Ascending aorta (tissue), 2 donors: ENCODE measurements at regions of chr19 and their contacts with region 1.

Region 1: GRCh38 chr19:44820648-44821609 is 12.0 kb downstream of the BCAM start:
- DNase-seq: peak; percentile 75 to 93
- H3K4me3 ChIP-seq: peak overlapping the region in 1 of 2 donors; percentile 44
- H3K27ac ChIP-seq: peak overlapping the region; percentile 82 to 87
- H3K4me1 ChIP-seq: peaks cover 0 to 18% of the 10 kb centered on the region in 2 donors
- H3K27me3 ChIP-seq: no peaks in the 10 kb centered on the region
- CTCF ChIP-seq: no peak

Region 2: DNA sequence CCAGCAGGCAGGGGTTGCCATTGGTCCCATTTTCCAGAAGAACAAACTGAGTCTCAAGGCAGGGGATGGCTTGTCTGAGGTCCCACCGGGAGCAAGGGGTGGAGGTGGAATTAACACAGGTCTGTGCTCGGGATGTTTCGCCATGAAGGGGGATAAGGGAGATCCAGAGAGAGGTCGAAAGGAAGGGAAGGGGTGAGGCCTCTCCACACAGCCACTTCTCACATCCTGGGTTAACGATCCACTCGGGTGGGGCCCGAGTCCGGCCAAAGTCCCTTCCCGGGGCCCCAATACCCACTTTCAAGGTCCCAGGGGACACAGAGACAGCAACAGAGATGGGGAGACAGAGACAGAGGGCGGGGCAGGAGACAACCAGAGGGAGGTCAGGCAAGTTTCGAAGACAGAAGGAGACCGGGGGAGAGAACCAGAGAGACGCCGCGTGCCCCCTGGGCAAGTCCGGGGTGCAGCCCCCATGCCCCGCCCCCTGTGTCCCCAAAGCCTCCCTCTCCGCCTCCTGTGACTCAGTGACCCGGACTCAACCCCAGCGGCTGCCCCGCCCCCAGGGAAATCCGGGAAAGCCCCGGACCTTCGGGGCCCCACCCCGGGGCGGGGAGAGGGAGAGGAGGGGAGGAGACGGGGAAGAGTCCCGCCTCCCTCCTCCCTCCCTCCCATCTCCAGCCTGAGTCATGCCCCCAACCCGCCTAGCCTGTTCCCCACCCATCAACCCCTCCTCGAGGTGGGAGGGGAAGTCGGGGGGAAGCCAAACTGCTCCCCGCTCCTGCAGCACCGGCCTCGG is 73.8 kb before region 1 on chr19:
- intact Hi-C with region 1: loop called (anchors 2 kb)
- DNase-seq: peak; percentile 89 to 98
- H3K4me3 ChIP-seq: peak overlapping the region; percentile 75 to 83
- H3K27ac ChIP-seq: peak overlapping the region; percentile 82 to 85
- H3K4me1 ChIP-seq: peaks cover 22 to 32% of the 10 kb centered on the region in 2 donors
- H3K27me3 ChIP-seq: no peaks in the 10 kb centered on the region
- CTCF ChIP-seq: no peak

Region 3: DNA sequence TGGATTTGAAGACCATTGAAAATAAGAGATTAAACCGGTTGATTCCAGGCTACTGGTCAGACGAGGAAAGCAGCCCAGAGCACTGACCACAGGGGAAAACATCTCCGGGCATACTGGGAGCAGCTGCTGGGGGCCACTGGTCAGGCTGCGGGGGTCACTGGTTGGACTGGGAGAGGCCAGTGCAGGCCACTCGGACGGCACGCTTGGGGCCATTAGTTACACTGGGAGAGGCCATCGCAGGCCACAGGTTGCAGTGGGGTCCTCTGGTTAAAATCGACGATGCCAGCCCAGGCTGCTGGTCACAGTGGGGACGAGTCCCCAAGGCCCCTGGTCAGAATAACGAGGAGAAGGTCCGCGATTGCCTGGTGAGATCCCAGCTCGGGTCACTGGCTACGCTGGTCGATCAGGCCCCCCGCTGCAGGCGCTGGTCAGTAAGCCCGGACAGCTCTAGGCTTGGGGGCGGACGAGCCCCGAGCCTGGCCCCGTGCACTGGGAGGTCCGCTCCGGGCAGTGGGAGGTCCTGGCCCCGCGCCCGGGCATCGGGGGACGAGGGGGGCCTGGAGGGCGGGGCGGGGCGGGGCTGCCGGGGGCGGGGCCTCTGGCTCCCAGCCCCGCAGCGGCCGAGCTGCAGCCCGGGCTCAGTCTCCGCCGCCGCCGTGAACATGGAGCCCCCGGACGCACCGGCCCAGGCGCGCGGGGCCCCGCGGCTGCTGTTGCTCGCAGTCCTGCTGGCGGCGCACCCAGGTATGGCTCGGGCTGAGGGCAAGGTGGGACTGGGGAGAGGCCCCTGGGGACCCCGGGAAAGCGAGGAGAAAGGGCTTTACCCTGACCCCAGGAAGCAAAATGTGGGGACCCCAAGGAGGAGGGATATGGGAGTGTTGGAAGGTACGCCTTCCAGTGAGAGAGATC is 12.2 kb before region 1 on chr19 and contains the start of gene BCAM:
- intact Hi-C with region 1: loop called (anchors 1 kb)
- DNase-seq: peak in 1 of 2 donors; percentile 87
- H3K4me3 ChIP-seq: peak within 1 kb of the TSS; percentile 74 to 88
- H3K27ac ChIP-seq: peak within 1 kb of the TSS; percentile 77 to 79
- H3K4me1 ChIP-seq: peaks cover 7 to 40% of the 10 kb centered on the region in 2 donors
- H3K27me3 ChIP-seq: no peaks in the 10 kb centered on the region
- CTCF ChIP-seq: no peak
- total RNA-seq, gene BCAM: 832 TPM